Ascending aorta (tissue), 2 donors: ENCODE measurements at regions of chr19 and their contacts with region 1.

Region 1: GRCh38 chr19:3163230-3163886 is 15.2 kb upstream of the S1PR4 start:
- DNase-seq: no peak
- H3K4me3 ChIP-seq: no peak overlapping the region
- H3K27ac ChIP-seq: no peak overlapping the region
- H3K4me1 ChIP-seq: no peaks in the 10 kb centered on the region
- H3K27me3 ChIP-seq: no peaks in the 10 kb centered on the region
- CTCF ChIP-seq: peak; percentile 84 to 97 (median 90)

Region 2: DNA sequence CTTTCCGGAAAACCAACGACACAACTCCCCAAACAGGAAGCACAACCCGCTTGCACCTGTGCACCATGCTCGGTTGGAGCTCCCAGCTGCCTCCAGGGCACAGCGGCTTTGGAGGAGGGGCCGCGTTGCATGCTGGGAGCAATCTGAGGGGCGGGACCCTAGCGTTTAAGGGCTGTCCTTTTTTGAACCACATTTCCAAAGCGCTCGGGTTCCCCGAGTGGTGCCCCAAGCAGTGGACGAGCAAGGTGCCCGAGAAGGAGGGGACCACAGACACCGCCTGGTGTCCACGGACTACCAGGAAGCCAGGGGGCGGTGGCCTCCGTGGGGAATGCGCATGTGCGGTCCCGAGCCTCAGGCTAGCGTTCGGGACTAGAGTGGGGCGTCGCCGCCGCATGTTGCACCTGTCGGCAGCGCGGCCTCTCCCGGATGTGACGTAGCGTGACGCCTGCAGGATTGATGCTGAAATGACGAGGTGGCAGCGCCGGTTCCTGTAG is 274.6 kb before region 1 on chr19:
- intact Hi-C with region 1: loop called (anchors 2 kb)
- DNase-seq: no peak
- H3K4me3 ChIP-seq: peak overlapping the region in 1 of 2 donors; percentile 51
- H3K27ac ChIP-seq: no peak overlapping the region
- H3K4me1 ChIP-seq: no peaks in the 10 kb centered on the region
- H3K27me3 ChIP-seq: no peaks in the 10 kb centered on the region
- CTCF ChIP-seq: no peak

Region 3: DNA sequence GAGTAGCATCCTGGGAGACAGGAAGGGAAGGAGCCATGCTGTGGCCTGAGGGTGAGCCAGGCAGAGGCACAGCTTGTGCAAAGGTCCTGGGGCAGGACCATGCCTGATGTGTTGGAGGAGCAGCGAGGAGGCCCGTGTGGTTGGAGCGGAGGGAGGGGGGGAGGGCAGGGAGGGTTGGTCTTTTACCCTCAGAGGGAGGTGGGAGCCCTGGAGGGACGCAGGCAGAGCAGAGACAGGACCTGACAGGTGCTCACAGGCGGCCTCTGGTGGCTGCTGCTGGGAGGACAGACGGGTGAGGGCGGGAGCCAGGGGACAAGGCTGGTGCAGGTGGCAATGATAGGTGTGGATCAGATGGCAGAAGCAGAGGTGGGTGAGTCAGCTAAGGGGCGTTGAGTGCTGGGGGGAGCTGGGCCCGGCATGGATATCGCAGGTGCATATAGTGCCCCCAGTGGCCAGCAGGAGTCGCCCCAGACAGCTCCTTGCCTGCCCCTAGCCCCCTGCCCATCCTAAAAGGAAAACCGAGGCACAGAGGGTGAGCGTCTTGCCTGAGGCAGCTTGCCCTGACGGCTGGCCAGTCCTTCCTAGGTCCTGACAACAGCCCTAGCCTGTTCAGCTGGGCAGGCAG is 37.3 kb before region 1 on chr19:
- intact Hi-C with region 1: loop called (anchors 2 kb)
- DNase-seq: peak in 1 of 2 donors; percentile 74
- H3K4me3 ChIP-seq: no peak overlapping the region
- H3K27ac ChIP-seq: no peak overlapping the region
- H3K4me1 ChIP-seq: no peaks in the 10 kb centered on the region
- H3K27me3 ChIP-seq: no peaks in the 10 kb centered on the region
- CTCF ChIP-seq: peak; percentile 51 to 82 (median 80)

Region 4: GRCh38 chr19:3360421-3361383 is 197.3 kb after region 1 on chr19:
- intact Hi-C with region 1: no loop called
- DNase-seq: peak in 1 of 2 donors; percentile 83
- H3K4me3 ChIP-seq: peak overlapping the region; percentile 83 to 99
- H3K27ac ChIP-seq: peak overlapping the region; percentile 93 to 94
- H3K4me1 ChIP-seq: peaks cover 19 to 34% of the 10 kb centered on the region in 2 donors
- H3K27me3 ChIP-seq: no peaks in the 10 kb centered on the region
- CTCF ChIP-seq: peak in 2 of 3 experiments; percentile 4 to 30